Ascending aorta (tissue), 2 donors: ENCODE measurements at regions of chr6 and their contacts with region 1.

Region 1: GRCh38 chr6:88368071-88368787 is 202.1 kb upstream of the CNR1 start:
- DNase-seq: no peak
- H3K4me3 ChIP-seq: no peak overlapping the region
- H3K27ac ChIP-seq: peak overlapping the region; percentile 13 to 58
- H3K4me1 ChIP-seq: peaks cover 0 to 11% of the 10 kb centered on the region in 2 donors
- H3K27me3 ChIP-seq: no peaks in the 10 kb centered on the region
- CTCF ChIP-seq: no peak

Region 2: GRCh38 chr6:88220493-88220892 is 147.7 kb before region 1 on chr6:
- intact Hi-C with region 1: no loop called
- DNase-seq: no peak
- H3K4me3 ChIP-seq: no peak overlapping the region
- H3K27ac ChIP-seq: no peak overlapping the region
- H3K4me1 ChIP-seq: no peaks in the 10 kb centered on the region
- H3K27me3 ChIP-seq: no peaks in the 10 kb centered on the region
- CTCF ChIP-seq: no peak

Region 3: GRCh38 chr6:88380083-88380482 is 11.9 kb after region 1 on chr6:
- intact Hi-C with region 1: loop called (anchors 1 kb)
- DNase-seq: peak; percentile 12 to 90
- H3K4me3 ChIP-seq: no peak overlapping the region
- H3K27ac ChIP-seq: peak overlapping the region; percentile 62 to 70
- H3K4me1 ChIP-seq: peaks cover 6 to 26% of the 10 kb centered on the region in 2 donors
- H3K27me3 ChIP-seq: no peaks in the 10 kb centered on the region
- CTCF ChIP-seq: no peak

Region 4: DNA sequence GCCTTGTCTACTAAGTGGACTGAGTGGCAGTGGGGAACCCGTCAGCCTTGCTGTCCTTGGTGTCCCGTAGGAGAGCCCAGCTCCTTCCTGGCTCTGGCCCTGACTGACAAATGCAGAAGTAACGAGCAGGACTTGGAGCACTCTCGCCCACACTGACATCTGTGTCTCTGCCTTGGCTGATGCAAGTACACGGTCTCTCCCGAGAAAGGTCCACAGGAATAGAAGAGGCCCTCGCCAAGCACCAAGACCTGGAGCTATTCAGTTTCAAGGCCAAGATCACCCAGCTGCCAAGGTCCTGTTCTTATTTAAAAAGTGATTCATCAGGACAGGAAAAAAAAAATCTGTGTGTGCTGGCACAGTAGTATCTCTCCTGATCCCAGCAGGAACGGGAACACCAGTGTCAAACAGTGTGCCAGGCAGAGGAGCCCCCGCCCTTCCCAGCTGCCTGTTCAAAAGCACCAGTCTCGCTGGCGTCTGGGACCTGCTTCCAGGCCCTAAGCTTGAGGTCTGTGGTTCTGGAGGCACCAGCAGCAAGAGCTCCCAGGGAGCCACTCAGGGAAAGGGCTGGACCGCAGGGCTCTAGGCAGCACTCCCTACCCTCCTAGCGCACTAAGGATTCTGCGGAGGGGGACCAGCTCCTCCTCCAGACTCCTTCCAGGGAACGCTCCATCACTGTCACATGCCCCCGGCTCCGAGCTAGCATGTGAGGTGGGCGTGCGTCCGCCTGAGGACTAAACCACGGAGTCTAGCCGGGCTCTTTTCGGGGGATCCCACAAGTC is 218.3 kb after region 1 on chr6:
- intact Hi-C with region 1: loop called (anchors 5 kb)
- DNase-seq: peak; percentile 29 to 88
- H3K4me3 ChIP-seq: peak overlapping the region in 1 of 2 donors; percentile 50
- H3K27ac ChIP-seq: peak overlapping the region; percentile 64 to 76
- H3K4me1 ChIP-seq: peaks cover 8 to 10% of the 10 kb centered on the region in 2 donors
- H3K27me3 ChIP-seq: no peaks in the 10 kb centered on the region
- CTCF ChIP-seq: no peak